ENCODE measurements at regions of chr18 and their contacts with region 1.

Region 1: GRCh38 chr18:22983175-22983574 is 50.0 kb downstream of the RBBP8 start:
- DNase-seq: no peak
- H3K4me3 ChIP-seq: no peak overlapping the region
- H3K27ac ChIP-seq: no peak overlapping the region
- H3K4me1 ChIP-seq: peaks cover 0 to 20% (median 4%) of the 10 kb centered on the region in 3 donors
- H3K27me3 ChIP-seq: no peaks in the 10 kb centered on the region
- CTCF ChIP-seq: peak; percentile 21 to 72 (median 44)
- POLR2A ChIP-seq: no peak

Region 2: DNA sequence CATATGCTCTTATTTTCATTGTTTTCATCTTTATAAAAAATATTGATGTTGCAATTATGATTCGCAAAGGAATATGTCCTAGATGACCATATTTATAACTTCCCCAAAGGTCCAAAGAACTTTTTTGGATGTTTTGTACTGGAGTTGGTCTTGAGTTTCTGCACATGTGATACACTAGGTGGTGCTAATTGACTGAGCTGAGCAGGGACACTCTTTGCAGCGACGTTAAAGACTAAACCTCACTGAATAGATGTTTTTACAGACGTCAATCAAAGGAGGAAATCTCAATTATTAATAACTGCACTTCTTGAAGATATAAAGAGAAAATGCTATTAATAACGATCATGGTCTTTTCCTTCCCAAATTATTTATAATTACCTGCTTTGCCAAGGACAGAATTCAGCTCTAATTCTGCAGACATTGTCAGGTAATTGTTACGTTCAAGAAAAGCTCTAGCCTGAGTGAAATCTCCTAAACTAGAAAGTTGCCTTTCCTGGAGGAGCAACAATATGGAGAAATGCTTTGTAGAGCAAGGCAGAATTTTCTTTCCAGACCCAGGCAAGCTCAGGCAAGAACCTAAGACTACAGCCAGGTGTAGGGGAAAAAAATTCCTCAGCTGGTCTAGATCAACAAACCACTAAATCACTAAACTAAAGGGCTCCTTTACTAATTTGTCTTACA is 169.4 kb before region 1 on chr18:
- intact Hi-C with region 1: loop called (anchors 5 kb)
- DNase-seq: no peak
- H3K4me3 ChIP-seq: no peak overlapping the region
- H3K27ac ChIP-seq: peak overlapping the region in 3 of 4 donors; percentile 25 to 49 (median 45)
- H3K4me1 ChIP-seq: peaks cover 0 to 27% (median 0%) of the 10 kb centered on the region in 3 donors
- H3K27me3 ChIP-seq: peaks cover 0 to 12% (median 0%) of the 10 kb centered on the region in 4 donors
- CTCF ChIP-seq: peak in 5 of 6 experiments; percentile 37 to 67 (median 53)
- POLR2A ChIP-seq: no peak

Measured in esophagus squamous epithelium (tissue), 5 donors.